Transverse colon (tissue), 4 donors: ENCODE measurements at regions of chr1 and their contacts with region 1.

Region 1: GRCh38 chr1:196660852-196661251 is 9.0 kb downstream of the CFH start:
- DNase-seq: no peak
- H3K4me3 ChIP-seq: peak overlapping the region in 1 of 4 donors; percentile 1
- H3K27ac ChIP-seq: no peak overlapping the region
- H3K4me1 ChIP-seq: no peaks in the 10 kb centered on the region
- H3K27me3 ChIP-seq: no peaks in the 10 kb centered on the region
- CTCF ChIP-seq: peak; percentile 29 to 58 (median 49)
- EP300 ChIP-seq: no peak
- POLR2A ChIP-seq: no peak

Region 2: GRCh38 chr1:196148367-196148970 is 512.4 kb before region 1 on chr1:
- in situ Hi-C with region 1: loop called (anchors 10 to 25 kb)
- intact Hi-C with region 1: loop called (anchors 10 kb)
- DNase-seq: no peak
- H3K4me3 ChIP-seq: no peak overlapping the region
- H3K27ac ChIP-seq: no peak overlapping the region
- H3K4me1 ChIP-seq: peaks cover 0 to 3% (median 0%) of the 10 kb centered on the region in 4 donors
- H3K27me3 ChIP-seq: no peaks in the 10 kb centered on the region
- CTCF ChIP-seq: peak in 4 of 5 experiments; percentile 39 to 63 (median 56)
- EP300 ChIP-seq: no peak
- POLR2A ChIP-seq: no peak

Region 3: GRCh38 chr1:196160066-196160795 is 500.6 kb before region 1 on chr1:
- in situ Hi-C with region 1: loop called in 1 of 4 experiments (anchors 25 kb)
- intact Hi-C with region 1: no loop called
- DNase-seq: no peak
- H3K4me3 ChIP-seq: no peak overlapping the region
- H3K27ac ChIP-seq: no peak overlapping the region
- H3K4me1 ChIP-seq: no peaks in the 10 kb centered on the region
- H3K27me3 ChIP-seq: no peaks in the 10 kb centered on the region
- CTCF ChIP-seq: no peak
- EP300 ChIP-seq: no peak
- POLR2A ChIP-seq: no peak